ENCODE measurements at regions of chr1 and their contacts with region 1.

Region 1: GRCh38 chr1:100037927-100038659 is 68.3 kb downstream of the SLC35A3 start:
- DNase-seq: peak; percentile 83 to 92 (median 88)
- ATAC-seq: peak; percentile 91
- H3K4me3 ChIP-seq: peak overlapping the region; percentile 70
- H3K4me3 Mint-ChIP-seq: peak overlapping the region; percentile 93 to 99 (median 97)
- H3K27ac ChIP-seq: peak overlapping the region; percentile 99
- H3K27ac Mint-ChIP-seq: peak overlapping the region; percentile 97 to 100 (median 99)
- H3K4me1 ChIP-seq: peaks cover 22 to 31% of the 10 kb centered on the region in 2 donors
- H3K4me1 Mint-ChIP-seq: peaks cover 29 to 68% (median 58%) of the 10 kb centered on the region in 7 donors
- H3K27me3 ChIP-seq: no peaks in the 10 kb centered on the region
- H3K27me3 Mint-ChIP-seq: no peaks in the 10 kb centered on the region

Region 2: GRCh38 chr1:98870959-98871903 is 1166.9 kb before region 1 on chr1:
- CTCF ChIA-PET with region 1: no interaction called
- POLR2A ChIA-PET with region 1: no interaction called
- intact Hi-C with region 1: loop called (anchors 1 to 5 kb)
- DNase-seq: peak in 8 of 9 donors; percentile 27 to 96 (median 92)
- ATAC-seq: peak; percentile 96
- H3K4me3 ChIP-seq: peak overlapping the region; percentile 56
- H3K4me3 Mint-ChIP-seq: peak overlapping the region; percentile 74 to 91 (median 86)
- H3K27ac ChIP-seq: peak overlapping the region; percentile 83
- H3K27ac Mint-ChIP-seq: peak overlapping the region; percentile 88 to 97 (median 93)
- H3K4me1 ChIP-seq: peaks cover 18 to 24% of the 10 kb centered on the region in 2 donors
- H3K4me1 Mint-ChIP-seq: peaks cover 21 to 66% (median 47%) of the 10 kb centered on the region in 7 donors
- H3K27me3 ChIP-seq: no peaks in the 10 kb centered on the region
- H3K27me3 Mint-ChIP-seq: no peaks in the 10 kb centered on the region

Region 3: DNA sequence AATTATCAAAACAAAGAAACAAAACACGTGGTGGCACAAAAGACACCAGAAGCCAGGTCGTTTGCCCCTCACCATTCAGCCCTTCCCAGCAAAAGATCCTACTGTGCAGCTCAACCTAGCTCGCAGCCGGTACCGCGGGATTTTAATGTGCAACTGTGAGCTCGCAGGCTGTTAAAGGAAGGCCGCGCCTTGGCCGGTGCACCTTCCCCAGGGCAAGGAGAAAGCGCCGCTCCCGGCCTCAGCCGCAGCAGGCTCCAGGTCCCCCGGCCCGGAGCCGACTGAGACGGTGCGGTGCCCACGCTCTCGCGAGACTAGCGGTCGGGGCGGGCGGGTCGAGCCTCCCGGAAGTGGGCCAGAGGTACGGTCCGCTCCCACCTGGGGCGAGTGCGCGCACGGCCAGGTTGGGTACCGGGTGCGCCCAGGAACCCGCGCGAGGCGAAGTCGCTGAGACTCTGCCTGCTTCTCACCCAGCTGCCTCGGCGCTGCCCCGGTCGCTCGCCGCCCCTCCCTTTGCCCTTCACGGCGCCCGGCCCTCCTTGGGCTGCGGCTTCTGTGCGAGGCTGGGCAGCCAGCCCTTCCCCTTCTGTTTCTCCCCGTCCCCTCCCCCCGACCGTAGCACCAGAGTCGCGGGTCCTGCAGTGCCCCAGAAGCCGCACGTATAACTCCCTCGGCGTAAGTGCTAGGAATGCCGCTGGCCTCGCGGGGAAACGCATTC is 188.2 kb before region 1 on chr1 and contains the start of gene AGL:
- CTCF ChIA-PET with region 1: no interaction called
- POLR2A ChIA-PET with region 1: interaction called, 3 read pairs
- intact Hi-C with region 1: loop called (anchors 1 to 2 kb)
- DNase-seq: peak; percentile 76 to 88 (median 86)
- ATAC-seq: peak; percentile 97
- H3K4me3 ChIP-seq: peak within 1 kb of the TSS; percentile 81
- H3K4me3 Mint-ChIP-seq: peak within 1 kb of the TSS; percentile 89 to 99 (median 96)
- H3K27ac ChIP-seq: peak within 1 kb of the TSS; percentile 75
- H3K27ac Mint-ChIP-seq: peak within 1 kb of the TSS; percentile 86 to 98 (median 96)
- H3K4me1 ChIP-seq: peaks cover 7 to 10% of the 10 kb centered on the region in 2 donors
- H3K4me1 Mint-ChIP-seq: peaks cover 20 to 42% (median 37%) of the 10 kb centered on the region in 7 donors
- H3K27me3 ChIP-seq: no peaks in the 10 kb centered on the region
- H3K27me3 Mint-ChIP-seq: no peaks in the 10 kb centered on the region
- total RNA-seq, gene AGL: 11.5 to 20.1 (median 12.5) TPM

Region 4: DNA sequence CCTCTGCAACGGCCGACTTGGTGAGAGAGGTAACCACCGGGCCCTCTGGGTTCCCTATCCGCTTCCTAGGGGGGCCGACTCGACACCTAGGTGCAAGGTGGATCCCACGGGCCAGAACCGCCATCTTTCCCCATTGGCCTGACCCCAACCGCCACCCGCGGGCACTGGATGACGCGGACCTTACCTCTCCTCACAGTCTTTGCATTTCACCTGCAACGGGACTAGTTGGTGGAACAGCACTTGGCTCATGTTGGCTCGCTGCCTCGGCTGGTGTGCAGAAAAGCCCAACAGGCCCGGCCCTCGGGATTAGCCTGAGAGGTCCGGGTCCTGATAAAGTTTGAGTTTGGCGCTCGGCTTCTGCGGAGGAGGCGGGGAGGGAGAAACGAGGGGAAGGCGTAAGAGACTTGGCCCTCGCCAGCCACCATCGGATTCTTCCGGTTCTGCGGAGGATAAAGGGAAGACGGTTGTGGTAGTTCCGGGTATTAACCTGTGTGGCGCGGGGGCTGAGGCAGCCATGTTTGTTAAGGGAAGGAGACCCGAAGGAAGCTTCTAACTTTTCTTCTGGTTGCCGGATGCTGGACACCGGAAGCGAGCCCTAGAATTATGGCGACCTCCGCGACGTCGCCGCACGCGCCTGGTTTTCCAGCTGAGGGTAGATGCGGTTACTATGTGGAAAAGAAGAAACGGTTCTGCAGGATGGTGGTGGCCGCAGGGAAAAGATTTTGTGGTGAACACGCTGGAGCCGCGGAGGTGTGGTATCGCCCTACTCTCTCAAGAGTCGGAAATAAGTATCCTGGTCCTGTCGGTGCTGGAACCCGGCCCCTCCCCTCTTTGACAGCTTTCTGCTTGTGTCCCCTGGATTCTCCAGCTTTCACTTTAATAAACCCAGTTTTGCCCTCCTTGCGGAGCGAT is 94.7 kb after region 1 on chr1 and contains the starts of genes SASS6 and TRMT13:
- CTCF ChIA-PET with region 1: no interaction called
- POLR2A ChIA-PET with region 1: interaction called, 8 read pairs
- intact Hi-C with region 1: loop called (anchors 1 kb)
- DNase-seq: peak; percentile 73 to 96 (median 94)
- ATAC-seq: peak; percentile 99
- H3K4me3 ChIP-seq: peak within 1 kb of the TSS; percentile 92
- H3K4me3 Mint-ChIP-seq: peak within 1 kb of the TSS; percentile 90 to 99 (median 98)
- H3K27ac ChIP-seq: peak within 1 kb of the TSS; percentile 74
- H3K27ac Mint-ChIP-seq: peak within 1 kb of the TSS; percentile 86 to 99 (median 96)
- H3K4me1 ChIP-seq: peaks cover 9 to 15% of the 10 kb centered on the region in 2 donors
- H3K4me1 Mint-ChIP-seq: peaks cover 7 to 53% (median 39%) of the 10 kb centered on the region in 7 donors
- H3K27me3 ChIP-seq: no peaks in the 10 kb centered on the region
- H3K27me3 Mint-ChIP-seq: no peaks in the 10 kb centered on the region
- total RNA-seq, gene SASS6: 2.5 to 11.6 (median 5.6) TPM
- total RNA-seq, gene TRMT13: 15.3 to 60.3 (median 23.9) TPM

Region 5: GRCh38 chr1:100443811-100444571 is 405.9 kb after region 1 on chr1:
- CTCF ChIA-PET with region 1: no interaction called
- POLR2A ChIA-PET with region 1: no interaction called
- intact Hi-C with region 1: loop called (anchors 2 to 5 kb)
- DNase-seq: peak in 5 of 9 donors; percentile 31 to 42 (median 36)
- ATAC-seq: peak; percentile 6
- H3K4me3 ChIP-seq: peak overlapping the region; percentile 12
- H3K4me3 Mint-ChIP-seq: peak overlapping the region; percentile 66 to 86 (median 81)
- H3K27ac ChIP-seq: peak overlapping the region; percentile 93
- H3K27ac Mint-ChIP-seq: peak overlapping the region; percentile 92 to 99 (median 98)
- H3K4me1 ChIP-seq: peaks cover 83 to 84% of the 10 kb centered on the region in 2 donors
- H3K4me1 Mint-ChIP-seq: peaks cover 53 to 95% (median 87%) of the 10 kb centered on the region in 7 donors
- H3K27me3 ChIP-seq: no peaks in the 10 kb centered on the region
- H3K27me3 Mint-ChIP-seq: no peaks in the 10 kb centered on the region

Region 6: GRCh38 chr1:100469578-100469977 is 431.5 kb after region 1 on chr1:
- CTCF ChIA-PET with region 1: no interaction called
- POLR2A ChIA-PET with region 1: no interaction called
- intact Hi-C with region 1: no loop called
- DNase-seq: no peak
- ATAC-seq: no peak
- H3K4me3 ChIP-seq: no peak overlapping the region
- H3K4me3 Mint-ChIP-seq: no peak overlapping the region
- H3K27ac ChIP-seq: no peak overlapping the region
- H3K27ac Mint-ChIP-seq: peak overlapping the region in 2 of 9 donors; percentile 7 to 36
- H3K4me1 ChIP-seq: no peaks in the 10 kb centered on the region
- H3K4me1 Mint-ChIP-seq: peaks cover 11 to 54% (median 37%) of the 10 kb centered on the region in 7 donors
- H3K27me3 ChIP-seq: no peaks in the 10 kb centered on the region
- H3K27me3 Mint-ChIP-seq: no peaks in the 10 kb centered on the region

Region 7: GRCh38 chr1:100613817-100614559 is 575.9 kb after region 1 on chr1:
- CTCF ChIA-PET with region 1: no interaction called
- POLR2A ChIA-PET with region 1: no interaction called
- intact Hi-C with region 1: loop called in 1 of 2 experiments (anchors 5 kb)
- DNase-seq: peak in 5 of 9 donors; percentile 10 to 42 (median 21)
- ATAC-seq: peak; percentile 56
- H3K4me3 ChIP-seq: peak overlapping the region; percentile 2
- H3K4me3 Mint-ChIP-seq: peak overlapping the region in 4 of 10 donors; percentile 24 to 68 (median 46)
- H3K27ac ChIP-seq: no peak overlapping the region
- H3K27ac Mint-ChIP-seq: peak overlapping the region in 1 of 9 donors; percentile 63
- H3K4me1 ChIP-seq: peaks cover 4 to 7% of the 10 kb centered on the region in 2 donors
- H3K4me1 Mint-ChIP-seq: peaks cover 9 to 23% (median 21%) of the 10 kb centered on the region in 7 donors
- H3K27me3 ChIP-seq: no peaks in the 10 kb centered on the region
- H3K27me3 Mint-ChIP-seq: peaks cover 0 to 17% (median 0%) of the 10 kb centered on the region in 5 donors

Measured in naive thymus-derived CD4-positive, alpha-beta T cell (primary cell).